ENCODE measurements at regions of chr12 and their contacts with region 1.

Region 1: GRCh38 chr12:27332407-27333301 is at the start of gene BMAL2:
- DNase-seq: no peak
- ATAC-seq: peak; percentile 83
- H3K4me3 ChIP-seq: peak within 1 kb of the TSS; percentile 66 to 81
- H3K27ac ChIP-seq: peak within 1 kb of the TSS; percentile 77
- H3K4me1 ChIP-seq: peaks cover 39% of the 10 kb centered on the region
- H3K27me3 ChIP-seq: no peaks in the 10 kb centered on the region
- CTCF ChIP-seq: no peak
- total RNA-seq, gene BMAL2: 43.9 TPM

Region 2: GRCh38 chr12:27279826-27280225 is 52.8 kb before region 1 on chr12:
- CTCF ChIA-PET with region 1: no interaction called
- POLR2A ChIA-PET with region 1: interaction called, 15 read pairs
- in situ Hi-C with region 1: no loop called
- intact Hi-C with region 1: no loop called
- DNase-seq: no peak
- ATAC-seq: no peak
- H3K4me3 ChIP-seq: no peak overlapping the region
- H3K27ac ChIP-seq: no peak overlapping the region
- H3K4me1 ChIP-seq: peaks cover 7% of the 10 kb centered on the region; the same call in 1 of the 2 replicates
- H3K27me3 ChIP-seq: no peaks in the 10 kb centered on the region
- CTCF ChIP-seq: no peak

Region 3: DNA sequence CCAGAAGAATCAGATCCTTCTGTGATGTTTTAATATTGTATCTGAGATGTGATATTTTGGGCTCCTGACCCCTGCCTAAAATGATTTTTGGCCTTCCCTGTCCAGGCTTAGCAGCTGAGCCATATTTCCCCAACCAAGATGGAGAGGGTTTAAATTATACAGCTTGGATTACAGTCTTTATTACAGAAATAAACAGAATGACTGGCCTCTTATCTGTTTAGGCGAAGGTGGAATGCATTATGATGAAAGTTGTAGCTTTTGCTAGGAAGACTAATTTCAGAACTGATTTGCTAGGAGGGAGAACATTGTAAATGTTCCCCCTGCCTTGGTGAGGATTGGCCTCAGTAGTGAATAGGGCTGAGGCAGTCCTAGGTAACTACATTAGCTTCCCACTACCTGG is 23.3 kb after region 1 on chr12:
- CTCF ChIA-PET with region 1: no interaction called
- POLR2A ChIA-PET with region 1: no interaction called
- in situ Hi-C with region 1: no loop called
- intact Hi-C with region 1: loop called (anchors 2 kb)
- DNase-seq: no peak
- ATAC-seq: no peak
- H3K4me3 ChIP-seq: no peak overlapping the region
- H3K27ac ChIP-seq: no peak overlapping the region
- H3K4me1 ChIP-seq: no peaks in the 10 kb centered on the region
- H3K27me3 ChIP-seq: no peaks in the 10 kb centered on the region
- CTCF ChIP-seq: no peak

Region 4: DNA sequence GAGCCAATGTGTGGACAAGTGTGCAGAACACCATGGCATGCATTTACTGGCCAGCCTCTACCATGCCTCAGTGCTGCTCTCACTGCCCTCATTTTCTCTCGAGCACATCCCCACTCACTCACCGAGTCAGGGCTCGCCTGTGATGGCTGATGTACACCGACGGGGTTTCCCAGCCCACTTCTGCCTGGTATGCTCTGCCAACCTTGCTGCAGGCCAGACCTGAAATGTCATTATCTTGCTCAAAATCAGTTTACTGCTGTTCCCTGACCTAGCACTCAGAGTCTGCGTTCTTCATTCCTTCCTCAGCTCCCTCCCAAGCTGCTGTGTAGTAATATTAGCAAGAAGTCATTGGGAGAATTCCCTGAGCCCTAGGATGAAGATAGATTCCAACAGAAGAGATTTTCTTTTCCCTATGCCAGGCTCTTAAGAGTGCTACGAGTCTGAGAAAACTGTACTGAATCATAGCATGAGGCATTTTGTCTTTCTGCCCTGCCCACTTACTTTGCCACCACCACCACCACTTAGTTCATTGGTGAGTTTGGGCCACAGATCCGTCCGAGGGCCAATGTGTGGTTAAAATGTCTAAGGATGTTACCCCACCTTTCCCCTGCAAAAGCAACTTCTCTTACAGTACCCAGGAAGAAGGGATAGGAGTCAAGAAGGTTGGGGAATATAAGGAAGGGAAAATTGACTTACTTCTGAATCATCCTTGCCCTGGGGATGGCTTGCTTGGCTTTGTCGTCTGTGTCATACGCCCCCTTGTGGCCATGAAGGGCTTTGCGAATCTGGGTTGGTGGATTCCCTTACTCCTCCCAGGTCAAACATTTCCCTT is 51.0 kb after region 1 on chr12:
- CTCF ChIA-PET with region 1: no interaction called
- POLR2A ChIA-PET with region 1: interaction called, 13 read pairs
- in situ Hi-C with region 1: no loop called
- intact Hi-C with region 1: loop called (anchors 10 kb)
- DNase-seq: peak; percentile 88
- ATAC-seq: peak; percentile 93
- H3K4me3 ChIP-seq: no peak overlapping the region
- H3K27ac ChIP-seq: no peak overlapping the region
- H3K4me1 ChIP-seq: no peaks in the 10 kb centered on the region
- H3K27me3 ChIP-seq: no peaks in the 10 kb centered on the region
- CTCF ChIP-seq: peak; percentile 98

Region 5: DNA sequence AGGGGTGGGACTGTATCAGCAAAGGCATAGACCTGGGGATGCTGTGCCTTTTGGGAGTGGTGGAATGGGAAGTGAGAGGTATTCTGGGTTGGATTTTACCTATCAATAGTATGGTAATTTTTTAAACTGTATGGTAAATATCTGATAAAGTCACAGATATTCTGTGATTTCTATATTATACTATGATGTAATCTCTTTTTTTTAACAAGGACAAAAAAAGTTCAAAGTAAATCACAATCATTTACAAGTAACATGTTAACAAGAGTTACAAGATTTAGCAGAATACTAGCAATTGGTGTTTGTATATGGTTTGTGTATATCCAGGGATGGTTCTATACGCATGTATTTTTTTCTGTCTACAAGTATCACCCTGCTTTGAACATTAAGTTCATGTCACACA is 56.0 kb after region 1 on chr12:
- CTCF ChIA-PET with region 1: no interaction called
- POLR2A ChIA-PET with region 1: interaction called, 13 read pairs
- in situ Hi-C with region 1: no loop called
- intact Hi-C with region 1: loop called (anchors 10 kb)
- DNase-seq: no peak
- ATAC-seq: no peak
- H3K4me3 ChIP-seq: no peak overlapping the region
- H3K27ac ChIP-seq: no peak overlapping the region
- H3K4me1 ChIP-seq: no peaks in the 10 kb centered on the region
- H3K27me3 ChIP-seq: no peaks in the 10 kb centered on the region
- CTCF ChIP-seq: no peak

Region 6: DNA sequence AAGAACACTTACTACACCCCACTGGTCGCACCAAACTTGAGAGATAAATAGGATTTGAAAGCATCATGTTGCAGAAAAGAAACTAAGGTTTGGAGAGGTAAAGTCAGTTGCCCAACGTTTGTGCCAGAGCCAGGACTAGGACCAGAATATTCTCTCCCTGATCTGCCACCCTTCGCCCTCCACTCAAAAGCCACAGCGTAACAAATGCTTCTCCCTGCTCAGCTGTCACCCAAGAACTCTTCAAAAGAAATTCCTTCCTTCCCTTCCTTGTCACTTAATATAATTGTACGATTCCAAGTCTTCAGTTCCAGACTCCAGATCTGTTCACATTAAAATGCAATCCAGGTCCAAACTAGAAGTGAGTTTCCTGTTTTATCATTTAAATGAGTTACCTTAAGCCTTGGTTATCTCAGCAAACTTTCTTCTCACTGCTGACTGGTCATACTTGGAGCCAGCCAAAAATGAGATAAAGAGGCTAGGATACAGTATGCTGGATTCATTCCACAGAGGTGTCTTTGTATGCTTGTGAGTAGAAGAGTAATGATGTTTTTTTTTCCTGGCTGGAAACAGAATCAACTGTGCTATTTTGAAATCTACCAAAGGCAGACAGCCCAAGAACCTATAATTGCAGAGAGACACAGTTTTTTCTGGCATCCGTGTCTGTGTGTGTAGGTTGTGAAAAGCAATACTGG is 178.5 kb after region 1 on chr12:
- CTCF ChIA-PET with region 1: no interaction called
- POLR2A ChIA-PET with region 1: no interaction called
- in situ Hi-C with region 1: no loop called
- intact Hi-C with region 1: no loop called
- DNase-seq: no peak
- ATAC-seq: no peak
- H3K4me3 ChIP-seq: no peak overlapping the region
- H3K27ac ChIP-seq: no peak overlapping the region
- H3K4me1 ChIP-seq: no peaks in the 10 kb centered on the region
- H3K27me3 ChIP-seq: no peaks in the 10 kb centered on the region
- CTCF ChIP-seq: no peak

Region 7: DNA sequence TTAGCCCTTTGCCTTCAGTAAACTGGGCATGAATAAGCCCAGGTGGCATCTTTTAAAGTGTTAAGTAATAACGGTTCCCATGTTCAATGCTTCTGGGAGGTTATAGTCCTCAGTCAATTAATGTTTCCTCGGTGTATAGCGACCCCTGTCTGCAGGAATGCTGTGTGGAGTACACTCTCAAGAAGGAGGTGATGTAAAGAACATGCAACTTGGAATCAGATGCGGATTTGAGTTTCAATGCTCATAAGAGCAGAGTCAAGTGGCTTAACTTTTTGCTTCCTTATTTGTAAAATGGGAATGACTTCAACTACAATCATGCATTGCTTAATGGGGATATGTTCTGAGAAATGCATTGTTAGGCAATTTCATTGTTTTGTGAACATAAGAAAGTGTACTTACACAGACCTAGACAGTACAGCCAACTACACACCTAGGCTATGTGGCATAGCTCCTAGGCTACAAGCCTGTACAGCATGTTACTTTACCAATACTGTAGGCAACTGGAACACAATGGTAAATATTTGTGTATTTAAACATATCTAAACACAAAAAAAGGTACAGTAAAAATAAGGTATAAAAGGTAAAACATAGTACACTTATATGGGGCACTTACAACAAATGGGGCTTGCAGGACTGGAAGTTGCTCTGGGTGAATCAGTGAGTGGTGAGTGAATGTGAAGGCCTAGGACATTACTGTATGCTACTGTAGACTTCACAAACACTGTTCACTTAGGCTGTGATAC is 371.2 kb after region 1 on chr12:
- CTCF ChIA-PET with region 1: no interaction called
- POLR2A ChIA-PET with region 1: no interaction called
- in situ Hi-C with region 1: no loop called
- intact Hi-C with region 1: loop called (anchors 10 kb)
- DNase-seq: peak; percentile 96
- ATAC-seq: peak; percentile 99
- H3K4me3 ChIP-seq: no peak overlapping the region
- H3K27ac ChIP-seq: peak overlapping the region; percentile 74; the same call in 1 of the 2 replicates
- H3K4me1 ChIP-seq: peaks cover 2% of the 10 kb centered on the region; the same call in 1 of the 2 replicates
- H3K27me3 ChIP-seq: no peaks in the 10 kb centered on the region
- CTCF ChIP-seq: peak; percentile 92

Measured in Panc1 (cell line).